ENCODE measurements at regions of chr18 and their contacts with region 1.

Region 1: DNA sequence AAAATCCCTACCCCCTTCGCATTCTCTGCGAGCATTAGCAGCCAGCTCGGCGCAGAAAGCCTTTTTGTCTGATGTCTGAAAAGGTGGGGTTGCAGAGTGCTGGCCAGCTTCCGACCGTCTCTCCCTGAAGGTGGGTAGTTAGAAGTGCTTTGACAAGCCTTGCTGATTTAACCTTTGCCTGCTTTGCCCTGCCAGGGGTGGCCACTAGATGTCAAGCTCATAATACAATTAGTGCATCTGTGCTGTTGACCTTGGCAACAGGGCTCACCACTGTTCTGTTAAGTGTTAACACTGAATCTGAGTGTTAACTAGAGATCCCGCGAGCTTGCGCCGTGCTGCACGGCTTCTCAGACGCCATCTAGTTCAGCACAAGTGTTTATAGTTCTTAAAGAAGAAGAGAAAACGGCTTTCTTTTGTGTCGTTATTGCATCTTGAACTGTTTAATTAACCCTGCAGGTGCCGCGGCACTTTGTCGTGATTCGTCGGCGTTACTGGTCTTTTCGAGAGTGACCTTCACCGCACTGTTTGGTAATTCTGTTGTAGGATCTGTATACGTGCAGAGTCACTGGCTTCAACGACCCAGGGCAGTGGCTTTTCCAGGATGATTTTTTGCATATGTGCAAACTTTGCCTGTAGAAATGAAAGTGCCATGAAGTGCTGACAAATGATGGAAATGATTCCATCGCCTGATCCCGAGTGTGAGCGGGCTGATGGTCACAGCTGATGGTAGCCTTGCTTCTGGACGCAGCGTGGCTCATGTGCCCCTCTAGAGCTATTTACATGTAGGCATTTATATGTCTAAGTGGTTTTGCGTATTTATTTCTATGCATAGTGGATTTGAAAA is 5.5 kb downstream of the SALL3 start:
- DNase-seq: peak; percentile 65
- ATAC-seq: peak; percentile 70
- H3K4me3 Mint-ChIP-seq: peak overlapping the region; percentile 70
- H3K27ac Mint-ChIP-seq: peak overlapping the region; percentile 97
- H3K4me1 Mint-ChIP-seq: peaks cover 80% of the 10 kb centered on the region
- H3K27me3 Mint-ChIP-seq: peaks cover 41% of the 10 kb centered on the region
- CTCF ChIP-seq: no peak

Region 2: GRCh38 chr18:78776706-78777285 is 208.4 kb before region 1 on chr18:
- CTCF ChIA-PET with region 1: no interaction called
- POLR2A ChIA-PET with region 1: no interaction called
- DNase-seq: no peak
- ATAC-seq: no peak
- H3K4me3 Mint-ChIP-seq: no peak overlapping the region
- H3K27ac Mint-ChIP-seq: no peak overlapping the region
- H3K4me1 Mint-ChIP-seq: no peaks in the 10 kb centered on the region
- H3K27me3 Mint-ChIP-seq: no peaks in the 10 kb centered on the region; the same call in 1 of the 2 replicates
- CTCF ChIP-seq: no peak

Region 3: DNA sequence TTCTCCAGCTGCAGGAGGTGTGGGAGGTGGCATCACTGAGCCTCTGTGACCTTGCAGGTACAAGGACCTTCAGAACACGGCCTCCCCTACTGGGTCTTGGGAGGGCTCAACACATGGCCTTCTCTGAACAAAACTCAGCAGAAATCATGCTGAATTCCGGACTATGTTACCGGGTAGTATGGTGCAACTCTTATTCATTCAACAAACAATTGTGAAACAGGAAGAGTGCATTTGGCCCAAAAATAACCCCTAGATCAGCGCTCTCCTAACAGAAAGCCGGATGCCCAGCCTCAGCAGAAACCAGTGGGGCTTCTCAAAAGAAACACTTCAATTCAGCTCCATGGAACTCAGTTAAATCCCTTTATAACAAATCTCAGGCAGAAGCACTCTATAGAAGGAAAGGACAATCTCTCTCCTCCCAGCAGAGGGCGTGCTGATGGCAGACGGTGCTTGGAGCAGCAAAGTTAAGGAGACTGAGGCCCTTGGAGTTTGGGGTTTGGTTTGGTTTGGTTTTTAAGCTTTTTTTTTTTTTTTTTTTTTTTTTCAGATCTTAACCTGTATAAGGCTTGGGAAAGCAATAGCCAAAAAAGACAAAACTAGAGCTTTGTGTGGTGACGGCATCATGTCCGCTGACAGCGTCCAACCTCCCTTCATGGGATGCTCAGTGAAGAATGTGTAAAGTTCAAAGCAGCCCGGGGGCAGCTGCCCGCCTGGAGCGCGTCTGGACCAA is 109.7 kb before region 1 on chr18:
- CTCF ChIA-PET with region 1: interaction called, 10 read pairs
- POLR2A ChIA-PET with region 1: no interaction called
- DNase-seq: peak; percentile 67
- ATAC-seq: peak; percentile 84
- H3K4me3 Mint-ChIP-seq: no peak overlapping the region
- H3K27ac Mint-ChIP-seq: no peak overlapping the region
- H3K4me1 Mint-ChIP-seq: peaks cover 9% of the 10 kb centered on the region
- H3K27me3 Mint-ChIP-seq: peaks cover 11% of the 10 kb centered on the region
- CTCF ChIP-seq: peak; percentile 44; the same call in 1 of the 2 replicates

Region 4: GRCh38 chr18:78957140-78957539 is 28.0 kb before region 1 on chr18:
- CTCF ChIA-PET with region 1: no interaction called
- POLR2A ChIA-PET with region 1: no interaction called
- DNase-seq: no peak
- ATAC-seq: no peak
- H3K4me3 Mint-ChIP-seq: no peak overlapping the region
- H3K27ac Mint-ChIP-seq: no peak overlapping the region
- H3K4me1 Mint-ChIP-seq: no peaks in the 10 kb centered on the region
- H3K27me3 Mint-ChIP-seq: peaks cover under 1% of the 10 kb centered on the region; the same call in 1 of the 2 replicates
- CTCF ChIP-seq: no peak

Region 5: GRCh38 chr18:78974115-78975018 is 10.8 kb before region 1 on chr18:
- CTCF ChIA-PET with region 1: interaction called, 10 read pairs
- POLR2A ChIA-PET with region 1: interaction called, 4 read pairs
- DNase-seq: peak; percentile 58
- ATAC-seq: no peak; the same call in 1 of the 2 replicates
- H3K4me3 Mint-ChIP-seq: peak overlapping the region; percentile 47
- H3K27ac Mint-ChIP-seq: no peak overlapping the region
- H3K4me1 Mint-ChIP-seq: peaks cover 42% of the 10 kb centered on the region
- H3K27me3 Mint-ChIP-seq: peaks cover 88% of the 10 kb centered on the region
- CTCF ChIP-seq: no peak

Region 6: DNA sequence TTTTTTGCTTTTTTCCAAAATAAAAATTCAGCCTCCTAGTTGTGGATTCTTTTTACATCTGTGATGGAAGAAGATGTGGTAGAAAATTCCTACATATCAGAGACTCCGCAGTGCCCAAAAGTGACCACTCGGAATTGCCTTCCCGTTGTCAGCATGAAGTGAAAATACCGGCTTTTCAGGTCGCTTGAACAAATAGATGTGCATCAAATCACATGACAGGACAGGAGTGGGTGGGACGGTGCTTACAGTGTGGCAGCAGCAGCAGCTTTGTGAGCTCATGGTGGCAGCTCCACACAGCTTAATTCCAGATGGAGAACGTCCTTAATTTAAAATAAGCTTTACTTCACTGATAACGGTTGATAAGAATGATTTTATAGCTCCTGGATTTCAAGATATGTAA is 14.8 kb after region 1 on chr18:
- CTCF ChIA-PET with region 1: interaction called, 14 read pairs
- POLR2A ChIA-PET with region 1: no interaction called
- DNase-seq: no peak
- ATAC-seq: no peak
- H3K4me3 Mint-ChIP-seq: no peak overlapping the region
- H3K27ac Mint-ChIP-seq: no peak overlapping the region
- H3K4me1 Mint-ChIP-seq: peaks cover 13% of the 10 kb centered on the region
- H3K27me3 Mint-ChIP-seq: no peaks in the 10 kb centered on the region
- CTCF ChIP-seq: no peak

Region 7: GRCh38 chr18:79068937-79069791 is 84.0 kb after region 1 on chr18 and contains the start of gene ATP9B:
- CTCF ChIA-PET with region 1: no interaction called
- POLR2A ChIA-PET with region 1: no interaction called
- DNase-seq: peak; percentile 98
- ATAC-seq: peak; percentile 92
- H3K4me3 Mint-ChIP-seq: peak within 1 kb of the TSS; percentile 87
- H3K27ac Mint-ChIP-seq: peak within 1 kb of the TSS; percentile 78
- H3K4me1 Mint-ChIP-seq: peaks cover 11% of the 10 kb centered on the region
- H3K27me3 Mint-ChIP-seq: peaks cover 32% of the 10 kb centered on the region
- CTCF ChIP-seq: no peak
- total RNA-seq, gene ATP9B: 17.7 to 19.0 TPM (median 18.6 TPM) in 3 replicates

Measured in WTC11 (cell line).